Activated naive CD4-positive, alpha-beta T cell treated with anti-CD3 and anti-CD28 coated beads for 36 hours (primary cell): ENCODE measurements at regions of chr2 and their contacts with region 1.

Region 1: DNA sequence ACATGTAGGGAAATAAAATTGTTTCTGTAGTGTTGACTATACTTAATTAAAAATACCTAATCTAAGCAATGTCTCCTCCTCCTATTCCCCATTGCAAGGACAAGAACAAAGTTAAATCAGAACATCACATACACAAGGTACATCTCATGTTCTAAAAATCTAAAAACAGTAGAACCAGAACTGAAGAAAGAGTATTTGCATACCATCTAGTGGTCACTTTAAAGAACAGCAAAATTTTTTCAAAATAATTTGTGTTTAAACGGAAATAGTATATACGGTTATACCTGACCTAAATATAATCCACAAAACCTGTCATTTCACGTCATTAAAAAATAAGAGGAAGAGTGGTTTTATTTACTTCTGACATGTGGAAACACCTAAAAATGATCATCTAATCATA is 294.3 kb upstream of the KCNH7 start:
- DNase-seq: no peak
- H3K4me3 Mint-ChIP-seq: no peak overlapping the region
- H3K27ac Mint-ChIP-seq: no peak overlapping the region
- H3K4me1 Mint-ChIP-seq: no peaks in the 10 kb centered on the region
- H3K27me3 Mint-ChIP-seq: no peaks in the 10 kb centered on the region

Region 2: DNA sequence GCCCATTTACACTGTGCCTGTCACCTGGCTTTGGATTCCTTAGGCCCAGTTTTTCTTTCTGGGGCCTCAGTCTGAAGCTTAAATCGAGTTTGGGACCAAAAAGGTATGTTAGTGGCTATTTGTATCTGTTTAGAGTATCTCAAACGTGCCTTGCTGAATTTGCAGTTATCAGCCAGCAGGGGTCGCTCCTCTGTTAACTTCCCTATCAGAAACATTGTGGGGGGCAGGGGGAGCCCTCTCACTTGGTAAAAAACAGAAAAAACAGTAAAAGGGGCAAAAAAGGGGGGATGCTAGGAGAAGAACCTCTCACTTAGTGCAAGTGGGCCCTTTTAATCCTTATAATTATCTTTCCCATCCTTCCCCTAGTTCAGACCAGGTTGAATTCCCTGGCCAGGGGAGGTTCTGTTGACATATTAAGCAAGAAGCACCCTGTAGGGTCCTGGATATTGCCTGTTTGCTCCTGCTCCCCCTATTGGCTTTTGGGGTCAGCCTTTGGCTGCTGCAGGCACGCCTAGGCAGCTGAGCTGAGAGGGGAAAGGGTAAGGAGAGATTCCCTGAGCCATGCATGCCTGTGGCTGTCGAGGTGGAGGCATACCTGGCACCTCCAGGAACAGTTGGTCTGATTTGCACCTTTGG is 805.6 kb before region 1 on chr2:
- CTCF ChIA-PET with region 1: no interaction called
- intact Hi-C with region 1: loop called (anchors 2 kb)
- DNase-seq: peak; percentile 45
- H3K4me3 Mint-ChIP-seq: no peak overlapping the region
- H3K27ac Mint-ChIP-seq: no peak overlapping the region
- H3K4me1 Mint-ChIP-seq: no peaks in the 10 kb centered on the region
- H3K27me3 Mint-ChIP-seq: no peaks in the 10 kb centered on the region